ENCODE measurements at regions of chr5 and their contacts with region 1.

Region 1: DNA sequence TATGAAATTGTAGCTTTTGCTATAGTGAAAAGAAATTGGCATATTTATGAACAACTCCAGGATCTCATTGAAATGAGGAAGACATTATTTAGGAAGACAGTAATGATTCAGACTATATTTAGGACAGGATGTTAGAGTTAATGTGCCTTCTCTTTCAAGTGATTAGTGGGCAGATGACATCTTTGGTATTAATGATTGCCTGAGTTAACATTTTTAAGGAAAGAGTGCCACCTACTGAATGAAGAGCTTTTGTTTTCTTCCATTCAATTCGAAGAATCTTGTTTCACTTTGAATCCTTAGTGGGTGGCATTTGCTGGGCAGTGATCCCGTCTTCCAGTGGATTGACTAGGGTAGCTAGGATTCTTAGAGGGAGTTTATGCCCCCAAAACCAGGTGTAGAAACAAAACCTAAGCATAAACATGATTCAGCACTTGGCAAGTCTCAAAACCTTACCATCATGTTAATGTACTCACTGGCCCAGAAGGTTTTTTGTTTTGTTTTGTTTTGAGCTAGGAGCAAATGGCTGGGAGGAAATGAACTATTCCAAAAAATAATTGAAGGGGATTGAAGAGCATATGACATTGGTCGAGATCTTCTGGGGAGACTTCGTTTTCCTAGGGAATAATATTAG is 23.2 kb downstream of the MAP3K1 start:
- DNase-seq: no peak
- ATAC-seq: peak; percentile 47
- H3K4me3 Mint-ChIP-seq: peak overlapping the region; percentile 30
- H3K27ac Mint-ChIP-seq: no peak overlapping the region
- H3K4me1 Mint-ChIP-seq: peaks cover 32% of the 10 kb centered on the region
- H3K27me3 Mint-ChIP-seq: no peaks in the 10 kb centered on the region

Region 2: DNA sequence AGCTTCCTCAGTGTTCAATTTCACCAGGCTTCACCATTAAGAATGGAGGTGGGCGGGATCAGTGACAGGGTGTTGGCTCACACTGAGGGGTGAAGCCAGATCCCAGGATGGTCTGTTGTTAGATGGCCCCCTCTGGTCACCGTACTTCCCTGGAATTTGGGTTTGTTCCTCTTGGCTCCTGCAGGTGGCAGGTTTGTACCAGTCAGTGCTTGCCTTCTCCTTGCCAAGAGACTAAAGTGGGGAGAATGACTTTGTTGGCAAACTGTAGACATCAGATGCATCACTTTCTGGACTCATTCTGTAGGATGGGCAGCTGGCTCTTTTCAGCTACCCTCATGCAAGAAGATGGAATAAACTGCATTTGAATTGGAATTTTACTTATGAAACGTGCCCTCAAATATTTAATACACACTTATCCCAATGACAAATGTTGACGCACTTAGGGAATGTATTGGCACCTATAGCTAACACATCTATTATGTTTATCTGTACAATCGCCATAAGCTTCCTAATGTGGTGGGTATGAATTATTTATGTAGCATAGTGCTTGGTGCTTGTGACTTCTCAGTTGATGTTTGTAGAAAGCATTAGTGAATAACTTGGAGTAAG is 574.0 kb before region 1 on chr5:
- CTCF ChIA-PET with region 1: interaction called, 112 read pairs
- POLR2A ChIA-PET with region 1: no interaction called
- DNase-seq: peak; percentile 34
- ATAC-seq: no peak
- H3K4me3 Mint-ChIP-seq: no peak overlapping the region
- H3K27ac Mint-ChIP-seq: no peak overlapping the region
- H3K4me1 Mint-ChIP-seq: peaks cover 2% of the 10 kb centered on the region
- H3K27me3 Mint-ChIP-seq: peaks cover 9% of the 10 kb centered on the region

Region 3: GRCh38 chr5:56270568-56271392 is 567.7 kb before region 1 on chr5:
- CTCF ChIA-PET with region 1: interaction called, 112 read pairs
- POLR2A ChIA-PET with region 1: interaction called, 4 read pairs
- DNase-seq: peak; percentile 78
- ATAC-seq: peak; percentile 94
- H3K4me3 Mint-ChIP-seq: no peak overlapping the region
- H3K27ac Mint-ChIP-seq: no peak overlapping the region
- H3K4me1 Mint-ChIP-seq: peaks cover 15% of the 10 kb centered on the region
- H3K27me3 Mint-ChIP-seq: peaks cover 2% of the 10 kb centered on the region

Region 4: DNA sequence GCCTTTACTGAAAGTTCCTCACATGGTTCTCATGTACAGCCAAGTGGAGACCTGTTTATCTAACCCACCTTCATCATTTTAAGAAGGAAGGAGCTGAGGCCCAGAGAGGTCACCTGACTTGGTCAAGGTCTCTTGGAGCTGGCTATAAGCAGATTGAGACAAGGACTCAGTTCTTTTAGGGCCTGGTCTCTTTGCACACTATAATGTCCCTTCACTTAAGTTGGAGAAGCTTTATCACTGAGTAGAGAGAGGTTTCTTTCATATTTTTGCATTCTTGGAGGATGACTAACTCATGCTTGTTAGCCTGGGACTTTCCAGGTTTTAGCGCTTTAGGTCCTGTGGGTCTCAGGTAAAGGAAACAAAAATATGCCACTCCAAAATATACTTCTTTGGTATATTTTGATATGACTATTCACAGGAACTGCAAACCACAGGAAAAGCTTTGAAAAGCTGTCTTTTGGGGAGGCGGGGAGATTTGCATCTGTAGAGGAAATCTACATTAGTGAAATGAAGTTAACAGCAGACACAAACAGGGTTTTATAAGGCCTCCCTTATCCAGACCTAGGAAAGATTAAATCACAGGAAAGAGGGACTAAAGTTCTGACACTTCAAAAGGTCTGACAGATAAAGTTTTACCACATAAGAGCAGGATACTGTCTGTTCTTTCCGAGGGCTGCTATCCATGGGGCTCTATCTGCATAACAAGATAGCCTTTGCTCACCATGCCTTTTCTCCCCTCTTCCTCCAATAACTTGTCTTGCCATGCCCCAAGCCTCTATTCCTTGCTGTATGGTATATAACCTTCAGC is 509.6 kb before region 1 on chr5:
- CTCF ChIA-PET with region 1: interaction called, 14 read pairs
- POLR2A ChIA-PET with region 1: no interaction called
- DNase-seq: peak; percentile 55
- ATAC-seq: peak; percentile 55
- H3K4me3 Mint-ChIP-seq: peak overlapping the region; percentile 40
- H3K27ac Mint-ChIP-seq: peak overlapping the region; percentile 88
- H3K4me1 Mint-ChIP-seq: peaks cover 59% of the 10 kb centered on the region
- H3K27me3 Mint-ChIP-seq: no peaks in the 10 kb centered on the region

Region 5: DNA sequence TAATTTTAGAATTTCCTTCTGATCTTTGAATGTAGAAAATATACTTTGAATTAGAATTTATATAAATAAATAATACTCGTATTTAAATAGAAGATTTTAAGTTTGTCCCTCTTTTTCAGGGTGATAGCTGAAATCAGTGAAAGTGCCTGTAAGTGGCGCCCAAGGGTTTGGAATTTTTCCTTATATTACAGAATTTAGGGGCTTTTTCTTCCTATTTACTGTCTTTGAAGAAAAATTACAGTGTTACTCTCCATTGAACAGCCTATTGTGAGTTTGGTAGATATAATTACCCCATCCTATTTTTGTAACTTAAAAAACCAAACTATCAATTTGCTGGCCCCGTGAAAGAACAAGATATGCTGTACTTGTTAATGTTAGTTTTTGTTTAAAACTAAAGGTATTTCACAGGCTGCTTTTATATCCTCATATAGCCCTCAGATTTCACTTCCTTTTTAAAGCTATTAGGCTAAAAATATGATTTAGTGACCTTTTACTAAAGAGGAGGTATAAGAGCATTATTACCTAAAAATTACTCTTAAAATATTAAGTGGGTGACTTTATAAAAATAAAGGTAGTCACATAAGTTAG is 20.0 kb before region 1 on chr5:
- CTCF ChIA-PET with region 1: interaction called, 16 read pairs
- POLR2A ChIA-PET with region 1: no interaction called
- DNase-seq: no peak
- ATAC-seq: no peak
- H3K4me3 Mint-ChIP-seq: peak overlapping the region; percentile 55
- H3K27ac Mint-ChIP-seq: no peak overlapping the region
- H3K4me1 Mint-ChIP-seq: peaks cover 42% of the 10 kb centered on the region
- H3K27me3 Mint-ChIP-seq: peaks cover 5% of the 10 kb centered on the region

Region 6: DNA sequence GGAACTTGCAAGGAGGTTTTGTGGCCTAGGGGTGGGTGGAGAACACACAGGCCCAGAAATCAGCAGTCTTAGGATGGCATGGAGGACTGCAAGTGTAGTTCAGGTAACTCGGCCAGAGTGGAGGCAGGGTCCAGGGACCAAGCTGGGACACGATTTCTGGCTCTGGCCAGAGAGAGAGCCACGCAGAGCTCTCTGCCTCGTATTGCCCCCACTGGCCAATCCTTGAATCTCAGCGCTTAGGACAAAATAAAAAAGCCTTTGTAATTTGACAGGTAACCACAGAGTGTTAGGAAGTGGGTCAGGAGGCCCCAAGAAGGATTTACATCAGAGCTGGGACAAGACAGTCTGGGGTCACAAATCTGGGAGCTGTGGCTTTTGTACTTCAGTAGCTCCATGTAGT is 11.5 kb before region 1 on chr5:
- CTCF ChIA-PET with region 1: interaction called, 13 read pairs
- POLR2A ChIA-PET with region 1: interaction called, 3 read pairs
- DNase-seq: no peak
- ATAC-seq: peak; percentile 29
- H3K4me3 Mint-ChIP-seq: no peak overlapping the region
- H3K27ac Mint-ChIP-seq: no peak overlapping the region
- H3K4me1 Mint-ChIP-seq: peaks cover 65% of the 10 kb centered on the region
- H3K27me3 Mint-ChIP-seq: no peaks in the 10 kb centered on the region

Region 7: DNA sequence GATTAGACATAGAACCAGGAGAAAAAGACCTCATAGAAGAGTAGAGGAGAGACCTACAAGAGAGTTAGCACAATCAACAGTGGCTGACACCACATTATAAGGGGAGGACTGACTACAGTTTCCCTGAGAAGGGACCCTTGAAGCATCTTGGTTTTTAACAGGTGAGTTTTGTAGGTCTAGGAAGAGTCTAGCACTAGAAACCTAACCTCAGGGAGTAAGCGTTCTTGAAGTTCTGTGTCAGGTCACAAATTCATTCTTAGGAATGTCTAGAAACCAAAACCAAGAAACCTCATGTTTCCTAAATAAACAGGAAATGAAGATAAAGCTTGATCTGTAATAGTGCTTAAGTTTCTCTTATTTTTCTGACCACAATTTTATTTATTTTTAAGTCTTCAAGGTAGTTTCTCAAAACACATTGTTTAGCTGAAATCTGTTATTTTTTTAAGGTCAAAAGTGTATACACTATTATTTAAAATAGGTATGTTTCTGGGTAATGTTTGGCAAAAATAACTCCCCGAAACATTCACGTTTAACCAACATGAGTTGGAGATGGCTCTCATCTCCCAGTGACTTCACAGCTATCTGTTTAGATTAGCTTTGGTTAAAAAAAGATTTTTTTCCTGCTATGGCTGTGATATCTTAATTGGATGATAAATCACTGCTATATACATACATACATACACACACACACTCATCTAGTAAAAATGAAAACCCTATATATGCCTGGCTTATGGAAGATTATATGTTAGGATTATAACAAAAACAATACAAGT is 13.9 kb after region 1 on chr5:
- CTCF ChIA-PET with region 1: interaction called, 10 read pairs
- POLR2A ChIA-PET with region 1: no interaction called
- DNase-seq: no peak
- ATAC-seq: peak; percentile 59
- H3K4me3 Mint-ChIP-seq: peak overlapping the region; percentile 23
- H3K27ac Mint-ChIP-seq: no peak overlapping the region
- H3K4me1 Mint-ChIP-seq: peaks cover 69% of the 10 kb centered on the region
- H3K27me3 Mint-ChIP-seq: no peaks in the 10 kb centered on the region